ENCODE measurements at regions of chr6 and their contacts with region 1.

Region 1: GRCh38 chr6:11732036-11732631 is 46.5 kb downstream of the ADTRP start:
- DNase-seq: peak; percentile 74
- CTCF ChIP-seq: no peak

Region 2: GRCh38 chr6:11824986-11825385 is 92.9 kb after region 1 on chr6:
- in situ Hi-C with region 1: loop called (anchors 10 kb)
- DNase-seq: peak; percentile 60
- CTCF ChIP-seq: no peak